ENCODE measurements at regions of chr9 and their contacts with region 1.

Region 1: DNA sequence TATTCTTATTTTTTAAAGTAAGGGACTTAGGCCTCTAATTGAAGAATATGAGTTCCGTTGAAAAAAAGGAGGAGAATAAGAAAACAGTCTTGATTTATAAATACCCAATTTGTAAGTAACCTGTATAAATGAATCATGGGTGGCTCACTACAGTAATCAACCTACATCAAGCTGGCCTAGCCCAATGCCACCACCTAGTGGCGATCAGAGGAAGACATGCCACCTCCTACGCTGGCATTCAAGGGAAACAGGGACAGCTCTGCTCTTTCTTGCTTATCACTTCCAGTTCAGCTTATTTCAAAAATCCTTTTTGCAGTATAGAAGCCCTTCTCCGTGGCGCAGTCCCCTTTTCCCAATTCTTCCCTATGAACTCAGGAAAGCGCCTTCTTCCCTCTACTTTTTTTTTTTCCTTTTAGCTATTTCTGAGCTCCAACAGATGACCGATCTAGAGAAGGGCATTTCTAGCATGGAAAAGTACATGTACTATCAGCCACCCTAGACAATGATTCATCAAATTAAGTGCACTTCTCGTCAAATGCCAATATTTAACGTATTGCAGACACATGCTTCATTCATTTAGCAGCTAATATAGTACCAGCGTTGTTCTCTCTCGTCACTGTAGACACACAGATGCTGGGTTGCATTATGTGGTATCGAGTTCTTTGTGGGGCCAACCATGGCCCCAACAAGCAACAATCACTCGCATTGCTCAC is 28.3 kb downstream of the PTPN3 start:
- DNase-seq: peak; percentile 69 to 79
- H3K4me3 ChIP-seq: no peak overlapping the region
- H3K27ac ChIP-seq: peak overlapping the region; percentile 48
- H3K4me1 ChIP-seq: peaks cover 59% of the 10 kb centered on the region
- H3K27me3 ChIP-seq: no peaks in the 10 kb centered on the region
- CTCF ChIP-seq: peak; percentile 93

Region 2: GRCh38 chr9:109401168-109401989 is 68.4 kb before region 1 on chr9:
- CTCF ChIA-PET with region 1: no interaction called
- POLR2A ChIA-PET with region 1: no interaction called
- intact Hi-C with region 1: loop called (anchors 2 kb)
- DNase-seq: peak; percentile 55 to 71
- H3K4me3 ChIP-seq: no peak overlapping the region
- H3K27ac ChIP-seq: no peak overlapping the region; the same call in 1 of the 2 replicates
- H3K4me1 ChIP-seq: no peaks in the 10 kb centered on the region
- H3K27me3 ChIP-seq: no peaks in the 10 kb centered on the region
- CTCF ChIP-seq: peak; percentile 89

Region 3: DNA sequence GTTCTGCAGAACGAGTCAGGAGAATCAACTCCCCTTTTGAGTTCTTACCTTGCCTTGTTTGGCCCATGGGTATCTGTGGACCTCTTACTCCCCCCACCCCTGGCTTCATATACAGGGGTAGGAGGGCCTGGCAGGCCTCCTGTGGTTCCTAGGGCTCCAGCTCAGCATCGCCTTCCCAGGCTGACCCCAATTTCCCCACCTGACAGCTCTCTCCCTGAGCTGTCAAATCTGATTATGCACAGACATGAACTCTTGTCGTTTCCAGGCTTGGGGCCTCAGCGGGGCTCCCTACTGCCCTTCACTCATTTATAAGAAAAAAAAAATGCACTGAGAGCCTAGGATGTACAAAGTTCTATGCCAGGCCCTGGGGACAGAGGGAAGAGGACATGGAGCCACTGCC is 39.6 kb before region 1 on chr9:
- CTCF ChIA-PET with region 1: no interaction called
- POLR2A ChIA-PET with region 1: no interaction called
- intact Hi-C with region 1: loop called (anchors 5 kb)
- DNase-seq: no peak
- H3K4me3 ChIP-seq: no peak overlapping the region
- H3K27ac ChIP-seq: no peak overlapping the region
- H3K4me1 ChIP-seq: no peaks in the 10 kb centered on the region
- H3K27me3 ChIP-seq: no peaks in the 10 kb centered on the region
- CTCF ChIP-seq: no peak

Region 4: DNA sequence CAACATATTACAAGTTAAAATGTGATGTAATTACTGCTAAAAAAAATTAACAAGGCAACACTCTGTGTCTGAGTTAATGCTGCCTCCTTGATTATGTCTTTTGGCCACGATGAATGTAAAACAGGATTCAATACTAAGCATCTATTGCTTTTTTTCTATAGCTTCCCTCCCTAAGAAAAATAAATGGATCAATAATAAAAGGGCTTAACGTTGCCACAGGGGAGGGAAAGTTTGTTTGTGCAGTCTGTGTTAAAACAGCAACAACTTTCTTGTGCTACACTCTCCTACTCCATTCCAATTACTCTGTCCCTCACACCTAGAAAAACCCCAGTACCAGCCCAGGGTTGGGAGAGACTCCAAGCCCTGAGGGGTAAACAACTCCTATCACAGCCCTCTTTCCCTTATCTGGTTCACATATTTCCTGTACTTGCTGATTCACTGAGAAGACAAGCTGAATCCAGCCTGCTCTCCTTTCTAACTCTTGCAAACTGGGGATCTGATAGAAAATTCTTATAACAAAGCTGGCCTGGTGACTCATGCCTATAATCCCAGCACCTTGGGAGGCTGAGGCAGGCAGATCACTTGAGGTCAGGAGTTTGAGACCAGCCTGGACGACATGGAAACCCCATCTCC is 16.5 kb before region 1 on chr9:
- CTCF ChIA-PET with region 1: interaction called, 6 read pairs
- POLR2A ChIA-PET with region 1: interaction called, 17 read pairs
- intact Hi-C with region 1: loop called (anchors 2 kb)
- DNase-seq: peak; percentile 85 to 97
- H3K4me3 ChIP-seq: 0 out of 2 replicates have a peak overlapping the region, but pooled peaks have one; percentile 9
- H3K27ac ChIP-seq: peak overlapping the region; percentile 97
- H3K4me1 ChIP-seq: peaks cover 38% of the 10 kb centered on the region
- H3K27me3 ChIP-seq: no peaks in the 10 kb centered on the region
- CTCF ChIP-seq: no peak